Right ventricle myocardium inferior (tissue), 1 donor: ENCODE measurements at regions of chr5 and their contacts with region 1.

Region 1: DNA sequence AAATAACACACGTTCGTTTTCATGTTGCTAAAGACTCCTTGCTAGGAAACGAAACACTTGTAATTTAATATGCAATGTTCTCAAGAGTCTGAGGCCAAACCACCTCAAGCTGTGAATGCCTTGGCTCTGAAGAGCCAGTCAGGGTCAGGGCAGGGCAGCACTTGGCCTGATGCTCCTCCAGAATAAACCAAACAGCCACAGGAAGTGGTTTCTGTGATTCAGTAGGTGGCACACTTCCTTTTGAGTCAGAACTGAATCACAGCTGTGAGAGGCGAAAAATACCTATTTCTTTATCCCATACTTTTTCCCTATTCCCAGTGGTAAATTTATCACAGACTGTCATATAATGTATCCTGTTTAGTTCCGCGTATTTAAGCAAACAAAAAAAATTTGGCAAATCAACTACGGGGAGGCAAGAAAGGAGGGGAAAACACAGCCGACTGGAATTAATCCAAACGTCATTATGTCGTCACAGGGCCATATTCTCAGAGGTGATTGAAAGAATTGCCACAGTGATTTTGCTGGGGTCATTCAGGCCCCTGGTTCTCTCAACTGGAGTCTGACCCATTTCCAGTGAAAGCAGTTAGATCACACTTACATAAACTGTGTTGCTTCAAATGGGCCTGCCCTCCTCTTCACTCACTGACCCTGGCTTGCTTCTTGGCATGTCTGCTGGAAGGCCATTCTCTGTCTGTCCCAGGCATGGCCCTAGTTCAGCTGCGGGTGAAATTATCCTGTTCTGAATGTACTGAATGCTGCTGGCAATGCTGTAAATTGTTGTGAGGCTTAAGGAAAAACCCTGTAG is 71.2 kb downstream of the ARRDC3 start:
- DNase-seq: peak; percentile 78
- ATAC-seq: peak; percentile 80

Region 2: DNA sequence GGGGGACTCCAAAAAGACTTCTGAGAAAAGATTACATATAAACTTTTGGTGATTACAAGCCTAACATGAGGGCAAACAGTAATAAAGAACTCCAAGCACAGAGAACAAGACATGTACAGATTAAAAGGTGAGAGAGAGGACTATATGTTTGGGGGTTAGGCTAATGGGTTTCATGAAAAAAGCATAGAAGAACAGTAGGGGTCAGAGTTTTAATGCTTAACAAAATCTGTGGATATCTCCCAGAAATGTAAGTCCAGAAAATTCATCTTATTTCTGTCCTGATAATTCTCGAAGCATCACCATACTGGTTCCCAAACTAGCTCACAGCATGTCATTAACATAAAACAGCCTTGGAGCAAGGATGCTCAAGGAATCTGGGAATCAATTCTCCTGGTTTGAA is 66.0 kb before region 1 on chr5:
- intact Hi-C with region 1: loop called (anchors 1 kb)
- DNase-seq: no peak
- ATAC-seq: no peak

Region 3: DNA sequence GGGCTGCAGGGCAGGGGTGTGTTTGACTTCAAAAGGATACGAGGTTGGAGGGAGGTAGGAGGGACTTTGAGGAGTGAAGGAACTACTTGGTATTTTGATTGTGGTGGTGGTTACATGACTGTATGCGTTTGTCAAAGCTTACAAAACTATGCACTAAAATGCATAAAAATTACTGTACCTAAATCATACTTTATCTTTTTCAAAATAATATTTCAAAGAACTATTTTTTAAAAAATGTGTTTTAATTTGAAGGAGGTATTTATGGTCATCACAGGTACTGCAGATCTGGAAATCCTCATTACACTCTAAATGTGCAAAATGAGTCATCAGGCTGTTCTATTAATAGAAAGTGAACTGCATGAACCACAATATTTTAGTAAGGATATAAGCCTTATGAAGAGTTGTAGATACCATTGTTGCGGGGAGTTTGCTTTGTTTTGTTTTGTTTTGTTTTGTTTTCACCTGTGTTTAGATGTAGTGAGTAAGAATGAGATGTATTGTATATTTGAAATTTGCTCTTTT is 45.7 kb before region 1 on chr5:
- intact Hi-C with region 1: loop called (anchors 5 kb)
- DNase-seq: no peak
- ATAC-seq: peak; percentile 68

Region 4: GRCh38 chr5:91280362-91281269 is 31.3 kb before region 1 on chr5:
- intact Hi-C with region 1: loop called (anchors 2 kb)
- DNase-seq: peak; percentile 96
- ATAC-seq: peak; percentile 97

Region 5: DNA sequence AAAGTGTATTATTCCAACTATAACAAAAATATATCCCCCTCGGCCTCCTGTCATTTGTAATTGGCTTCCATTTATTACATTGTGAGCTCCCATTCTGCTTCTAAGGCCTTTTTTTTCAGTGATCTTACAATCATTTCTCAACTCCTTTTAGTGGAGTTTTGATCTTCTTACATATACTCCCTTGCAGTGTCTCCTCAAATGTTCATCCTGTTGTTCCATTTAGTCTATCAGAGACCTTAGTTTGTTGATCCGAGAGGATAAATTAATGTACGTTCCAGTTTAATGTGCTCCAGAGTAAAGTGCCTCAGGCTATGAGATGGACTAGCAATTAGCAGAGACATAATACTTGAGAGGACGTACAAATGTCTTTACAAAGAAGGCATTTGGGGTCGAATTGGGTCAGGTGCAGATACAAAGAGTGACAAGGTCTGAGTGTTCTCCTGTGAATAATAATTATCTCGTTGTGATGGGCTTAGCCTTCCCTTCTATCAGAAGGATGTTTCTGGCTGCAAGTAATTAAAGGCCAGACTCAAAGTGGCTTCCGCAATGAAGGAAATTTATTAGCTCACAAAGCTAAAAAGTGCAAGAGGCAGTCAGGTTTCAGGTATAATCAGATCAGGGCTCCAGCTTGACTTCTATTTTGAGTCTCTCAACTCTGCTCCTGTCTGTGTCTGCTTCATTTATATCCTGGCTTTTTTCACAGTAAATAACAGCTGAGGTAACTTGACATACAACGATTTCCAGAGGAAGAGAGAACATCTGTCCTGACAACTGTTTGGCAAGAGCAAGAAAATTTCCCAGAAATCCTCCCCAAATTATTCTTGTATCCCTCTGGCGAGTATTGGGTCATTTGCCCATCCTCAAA is 41.2 kb after region 1 on chr5:
- intact Hi-C with region 1: no loop called
- DNase-seq: no peak
- ATAC-seq: no peak

Region 6: DNA sequence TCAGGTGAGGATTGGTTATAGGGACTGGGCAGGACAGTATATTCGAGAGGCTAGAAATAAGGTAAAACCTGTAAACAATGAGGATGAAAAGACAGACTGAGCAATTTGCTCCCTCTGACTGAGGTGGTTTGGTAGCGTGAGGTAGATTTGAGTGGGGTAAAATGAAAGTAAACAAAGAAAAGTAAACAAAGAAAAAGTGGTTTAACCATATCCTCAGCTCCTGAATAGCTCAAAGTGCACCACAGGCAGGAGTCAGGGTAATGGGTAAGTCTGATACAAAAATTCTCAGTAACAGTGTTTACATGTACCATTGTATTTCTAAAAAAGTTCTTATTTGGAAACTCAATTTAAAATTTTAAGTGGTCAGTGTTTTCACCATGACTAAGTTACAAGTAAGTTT is 274.3 kb after region 1 on chr5:
- intact Hi-C with region 1: no loop called
- DNase-seq: no peak
- ATAC-seq: no peak